Activated CD8-positive, alpha-beta T cell treated with anti-CD3 and anti-CD28 coated beads for 36 hours (primary cell): ENCODE measurements at regions of chr6 and their contacts with region 1.

Region 1: GRCh38 chr6:56637640-56638039 is 5.0 kb downstream of the DST start:
- DNase-seq: no peak
- ATAC-seq: no peak
- H3K4me3 Mint-ChIP-seq: no peak overlapping the region
- H3K27ac Mint-ChIP-seq: no peak overlapping the region
- H3K4me1 Mint-ChIP-seq: no peaks in the 10 kb centered on the region
- H3K27me3 Mint-ChIP-seq: peaks cover 2% of the 10 kb centered on the region
- CTCF ChIP-seq: peak; percentile 70

Region 2: DNA sequence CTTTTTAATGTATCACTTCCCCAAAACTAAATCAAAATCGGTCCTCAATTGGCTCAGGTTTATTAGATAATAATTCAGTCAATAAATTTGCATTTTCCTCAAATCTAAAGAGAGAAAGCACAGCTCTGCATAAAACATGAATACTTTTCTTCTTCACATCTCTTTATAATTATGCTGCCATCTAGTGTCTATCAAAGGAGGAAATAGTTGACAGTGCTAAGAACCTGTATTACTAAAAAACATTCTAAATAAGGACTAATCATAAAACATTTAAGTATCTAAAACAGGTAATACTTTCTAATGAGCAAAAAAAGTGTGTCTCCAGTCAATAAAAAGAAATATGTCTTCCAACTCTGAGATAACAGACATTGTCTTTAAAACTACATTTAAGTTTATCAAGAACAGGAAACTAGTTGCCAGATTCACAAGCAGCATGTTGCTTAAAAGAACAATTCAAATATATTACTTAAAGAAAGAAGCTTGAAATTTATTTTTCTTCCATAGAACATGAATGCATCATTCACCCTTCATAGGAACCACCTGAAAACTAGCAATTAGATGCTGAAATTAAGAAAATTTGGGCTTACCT is 61.5 kb after region 1 on chr6:
- CTCF ChIA-PET with region 1: interaction called, 10 read pairs
- POLR2A ChIA-PET with region 1: no interaction called
- intact Hi-C with region 1: loop called (anchors 5 kb)
- DNase-seq: no peak
- ATAC-seq: no peak
- H3K4me3 Mint-ChIP-seq: no peak overlapping the region
- H3K27ac Mint-ChIP-seq: no peak overlapping the region
- H3K4me1 Mint-ChIP-seq: no peaks in the 10 kb centered on the region
- H3K27me3 Mint-ChIP-seq: peaks cover 1% of the 10 kb centered on the region
- CTCF ChIP-seq: peak; percentile 60

Region 3: GRCh38 chr6:56851541-56852259 is 214.1 kb after region 1 on chr6:
- CTCF ChIA-PET with region 1: interaction called, 4 read pairs
- POLR2A ChIA-PET with region 1: no interaction called
- intact Hi-C with region 1: loop called (anchors 10 kb)
- DNase-seq: peak; percentile 70
- ATAC-seq: peak; percentile 91
- H3K4me3 Mint-ChIP-seq: peak overlapping the region; percentile 54
- H3K27ac Mint-ChIP-seq: no peak overlapping the region
- H3K4me1 Mint-ChIP-seq: peaks cover 13% of the 10 kb centered on the region
- H3K27me3 Mint-ChIP-seq: peaks cover 45% of the 10 kb centered on the region
- CTCF ChIP-seq: peak; percentile 43